ENCODE measurements at regions of chr2 and their contacts with region 1.

Region 1: GRCh38 chr2:69436938-69437750 is at the start of gene NFU1:
- DNase-seq: peak; percentile 94 to 97
- H3K4me3 ChIP-seq: peak within 1 kb of the TSS; percentile 51
- H3K4me3 Mint-ChIP-seq: peak within 1 kb of the TSS; percentile 75
- H3K27ac Mint-ChIP-seq: peak within 1 kb of the TSS; percentile 88
- H3K4me1 ChIP-seq: peaks cover 15% of the 10 kb centered on the region
- H3K4me1 Mint-ChIP-seq: peaks cover 7% of the 10 kb centered on the region
- H3K27me3 ChIP-seq: no peaks in the 10 kb centered on the region
- H3K27me3 Mint-ChIP-seq: no peaks in the 10 kb centered on the region
- CTCF ChIP-seq: peak; percentile 68 to 87
- total RNA-seq, gene NFU1: 72.5 and 85.3 TPM in 2 replicates

Region 2: DNA sequence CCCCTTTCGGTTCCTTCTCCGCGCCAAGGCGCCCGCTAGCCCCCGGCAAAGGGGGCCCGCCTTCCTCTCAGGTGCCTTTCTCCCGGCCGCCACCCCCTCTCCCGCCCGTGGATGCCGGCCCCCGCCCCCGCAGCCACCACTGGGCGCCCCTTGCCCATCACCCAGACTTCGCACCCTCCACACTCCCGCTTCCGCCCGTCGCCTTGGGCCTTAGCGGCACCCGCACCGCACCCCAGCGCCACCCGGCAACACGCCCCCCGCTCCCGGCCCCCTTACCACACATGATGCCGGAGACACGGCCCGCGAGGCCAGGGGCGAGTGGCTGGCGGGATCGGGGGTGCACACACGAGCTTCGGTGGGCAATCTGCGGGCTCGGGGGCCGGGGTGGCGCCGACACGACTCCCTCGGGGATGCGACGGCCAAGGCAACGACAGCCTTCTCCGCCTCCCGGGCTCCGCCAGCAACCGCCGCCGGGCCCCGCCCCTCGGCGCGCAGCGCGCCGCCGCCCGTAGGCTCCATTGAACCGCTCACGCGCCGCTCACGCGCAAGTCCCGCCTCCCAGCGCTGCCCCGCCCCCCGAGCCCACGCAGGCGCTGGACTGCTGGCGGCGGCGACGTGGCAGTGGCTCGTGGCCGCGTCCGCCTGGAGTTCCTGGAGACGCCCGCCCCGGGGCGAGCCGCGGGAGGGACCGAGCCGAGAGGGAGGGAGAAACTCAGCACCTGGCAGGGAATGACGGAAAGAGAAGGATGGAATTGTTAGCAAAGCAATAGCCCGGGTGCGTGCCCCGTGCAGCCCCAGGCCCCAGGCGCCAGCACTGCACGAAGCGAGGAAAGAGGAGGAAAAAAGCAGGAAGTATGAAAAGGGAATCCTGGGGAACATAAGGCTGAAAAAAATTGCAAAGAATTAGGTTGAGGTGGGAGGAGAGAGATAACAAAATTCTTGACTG is 50.1 kb before region 1 on chr2 and contains the start of gene GFPT1:
- CTCF ChIA-PET with region 1: interaction called, 9 read pairs
- POLR2A ChIA-PET with region 1: interaction called, 11 read pairs
- intact Hi-C with region 1: loop called (anchors 2 kb)
- DNase-seq: peak; percentile 95 to 98
- H3K4me3 ChIP-seq: peak within 1 kb of the TSS; percentile 98
- H3K4me3 Mint-ChIP-seq: peak within 1 kb of the TSS; percentile 96
- H3K27ac Mint-ChIP-seq: peak within 1 kb of the TSS; percentile 96
- H3K4me1 ChIP-seq: peaks cover 25% of the 10 kb centered on the region
- H3K4me1 Mint-ChIP-seq: peaks cover 18% of the 10 kb centered on the region
- H3K27me3 ChIP-seq: no peaks in the 10 kb centered on the region
- H3K27me3 Mint-ChIP-seq: no peaks in the 10 kb centered on the region
- CTCF ChIP-seq: no peak
- total RNA-seq, gene GFPT1: 122 and 129 TPM in 2 replicates

Region 3: GRCh38 chr2:69450735-69451416 is 13.7 kb after region 1 on chr2:
- CTCF ChIA-PET with region 1: interaction called, 11 read pairs
- POLR2A ChIA-PET with region 1: interaction called, 16 read pairs
- intact Hi-C with region 1: no loop called
- DNase-seq: peak; percentile 60 to 76
- H3K4me3 ChIP-seq: no peak overlapping the region
- H3K4me3 Mint-ChIP-seq: peak overlapping the region; percentile 3
- H3K27ac Mint-ChIP-seq: peak overlapping the region; percentile 20
- H3K4me1 ChIP-seq: peaks cover 48% of the 10 kb centered on the region
- H3K4me1 Mint-ChIP-seq: peaks cover 30% of the 10 kb centered on the region
- H3K27me3 ChIP-seq: no peaks in the 10 kb centered on the region
- H3K27me3 Mint-ChIP-seq: no peaks in the 10 kb centered on the region
- CTCF ChIP-seq: no peak

Region 4: GRCh38 chr2:69483696-69484095 is 46.6 kb after region 1 on chr2:
- CTCF ChIA-PET with region 1: interaction called, 3 read pairs
- POLR2A ChIA-PET with region 1: interaction called, 5 read pairs
- intact Hi-C with region 1: loop called (anchors 2 kb)
- DNase-seq: no peak
- H3K4me3 ChIP-seq: no peak overlapping the region
- H3K4me3 Mint-ChIP-seq: no peak overlapping the region
- H3K27ac Mint-ChIP-seq: no peak overlapping the region
- H3K4me1 ChIP-seq: peaks cover 14% of the 10 kb centered on the region
- H3K4me1 Mint-ChIP-seq: peaks cover 16% of the 10 kb centered on the region
- H3K27me3 ChIP-seq: no peaks in the 10 kb centered on the region
- H3K27me3 Mint-ChIP-seq: no peaks in the 10 kb centered on the region
- CTCF ChIP-seq: no peak

Region 5: DNA sequence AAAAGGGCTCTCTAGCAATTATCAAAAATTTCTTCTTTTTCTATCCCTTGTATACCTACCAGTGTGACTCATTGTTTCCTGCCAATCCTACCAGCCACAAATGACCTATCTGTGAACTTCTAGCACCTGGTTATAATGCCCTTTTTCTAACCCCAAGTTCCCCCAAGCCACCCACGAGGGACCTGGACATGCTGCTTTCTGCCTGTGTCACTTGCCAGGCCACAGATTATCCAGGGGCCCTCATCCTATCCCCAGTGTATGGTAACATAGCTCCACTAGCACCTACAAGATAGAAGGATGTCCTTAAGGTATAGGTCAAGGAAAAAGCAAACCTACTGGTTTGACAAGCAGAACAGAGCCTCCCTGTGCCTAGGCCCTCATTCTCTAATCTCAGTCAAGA is 179.6 kb after region 1 on chr2:
- CTCF ChIA-PET with region 1: no interaction called
- POLR2A ChIA-PET with region 1: no interaction called
- intact Hi-C with region 1: no loop called
- DNase-seq: no peak
- H3K4me3 ChIP-seq: no peak overlapping the region
- H3K4me3 Mint-ChIP-seq: no peak overlapping the region
- H3K27ac Mint-ChIP-seq: no peak overlapping the region
- H3K4me1 ChIP-seq: peaks cover 33% of the 10 kb centered on the region
- H3K4me1 Mint-ChIP-seq: peaks cover 15% of the 10 kb centered on the region
- H3K27me3 ChIP-seq: no peaks in the 10 kb centered on the region
- H3K27me3 Mint-ChIP-seq: no peaks in the 10 kb centered on the region
- CTCF ChIP-seq: no peak

Measured in Caco-2 (cell line).